HCT116 (cell line): ENCODE measurements at regions of chr1 and their contacts with region 1.

Region 1: DNA sequence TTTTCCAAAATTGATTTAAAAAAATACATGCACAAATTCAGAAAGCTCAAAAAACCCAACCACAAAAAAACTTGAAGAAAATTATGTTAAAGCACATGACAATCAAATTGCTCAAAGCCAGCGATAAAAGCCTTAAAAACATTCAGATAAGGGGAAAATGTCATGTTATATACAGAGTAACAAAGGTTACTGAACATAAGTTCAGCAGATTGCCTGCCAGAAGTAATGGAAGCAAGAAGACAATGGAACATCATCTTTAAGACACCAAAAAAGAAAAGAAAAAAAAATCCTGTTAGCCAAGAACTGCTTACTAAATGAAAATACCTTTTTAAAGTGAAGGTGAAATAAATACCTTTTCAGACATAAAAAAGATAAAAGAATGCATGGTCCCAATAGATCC is 147.2 kb upstream of the SGIP1 start:
- DNase-seq: no peak
- ATAC-seq: no peak
- H3K4me3 ChIP-seq: no peak overlapping the region
- H3K27ac ChIP-seq: no peak overlapping the region
- H3K4me1 ChIP-seq: no peaks in the 10 kb centered on the region
- H3K27me3 ChIP-seq: no peaks in the 10 kb centered on the region
- CTCF ChIP-seq: no peak
- POLR2A ChIP-seq: no peak
- RAD21 ChIP-seq: no peak

Region 2: DNA sequence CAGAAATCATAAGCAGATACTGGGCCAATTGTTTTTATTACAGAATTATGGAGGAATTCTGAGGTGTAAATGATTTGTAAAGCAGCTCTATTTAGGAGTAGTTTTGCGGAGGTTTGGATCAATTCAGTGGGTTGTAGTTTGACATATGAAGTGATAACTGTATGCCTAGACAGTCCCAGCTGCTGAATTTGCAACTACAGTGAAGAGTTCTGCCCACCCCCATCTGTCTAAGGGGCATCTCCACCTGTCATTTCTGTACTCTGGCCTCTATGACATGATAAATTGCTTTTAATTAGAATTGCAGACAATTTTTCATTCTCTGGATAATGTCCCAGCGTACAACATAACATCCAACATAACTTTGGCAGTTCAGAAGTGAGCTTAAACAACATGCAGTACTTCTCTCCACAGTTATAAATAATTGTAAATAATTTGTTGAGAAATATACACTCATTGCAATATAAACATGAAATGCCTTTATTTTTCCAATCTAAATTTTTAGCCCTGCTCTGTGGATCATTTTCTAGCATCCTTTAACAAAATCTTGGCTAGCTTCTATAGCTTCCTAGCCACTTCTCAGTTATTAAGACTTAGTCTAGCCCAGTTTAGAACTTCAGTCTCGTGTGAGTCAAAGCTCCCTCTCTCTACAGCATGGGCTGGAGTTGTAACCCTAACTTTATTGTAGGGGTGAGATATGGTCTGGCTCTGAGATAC is 541.7 kb before region 1 on chr1:
- CTCF ChIA-PET with region 1: no interaction called
- POLR2A ChIA-PET with region 1: no interaction called
- RAD21 ChIA-PET with region 1: no interaction called
- intact Hi-C with region 1: no loop called
- DNase-seq: no peak
- ATAC-seq: no peak
- H3K4me3 ChIP-seq: no peak overlapping the region
- H3K27ac ChIP-seq: no peak overlapping the region
- H3K4me1 ChIP-seq: no peaks in the 10 kb centered on the region
- H3K27me3 ChIP-seq: no peaks in the 10 kb centered on the region
- CTCF ChIP-seq: no peak
- POLR2A ChIP-seq: no peak
- RAD21 ChIP-seq: no peak

Region 3: GRCh38 chr1:66413136-66413837 is 26.6 kb after region 1 on chr1:
- CTCF ChIA-PET with region 1: no interaction called
- POLR2A ChIA-PET with region 1: no interaction called
- RAD21 ChIA-PET with region 1: no interaction called
- intact Hi-C with region 1: loop called (anchors 1 kb)
- DNase-seq: no peak
- ATAC-seq: no peak
- H3K4me3 ChIP-seq: no peak overlapping the region
- H3K27ac ChIP-seq: no peak overlapping the region
- H3K4me1 ChIP-seq: no peaks in the 10 kb centered on the region; a peak in 1 of 4 replicates
- H3K27me3 ChIP-seq: no peaks in the 10 kb centered on the region
- CTCF ChIP-seq: no peak
- POLR2A ChIP-seq: no peak
- RAD21 ChIP-seq: no peak

Region 4: DNA sequence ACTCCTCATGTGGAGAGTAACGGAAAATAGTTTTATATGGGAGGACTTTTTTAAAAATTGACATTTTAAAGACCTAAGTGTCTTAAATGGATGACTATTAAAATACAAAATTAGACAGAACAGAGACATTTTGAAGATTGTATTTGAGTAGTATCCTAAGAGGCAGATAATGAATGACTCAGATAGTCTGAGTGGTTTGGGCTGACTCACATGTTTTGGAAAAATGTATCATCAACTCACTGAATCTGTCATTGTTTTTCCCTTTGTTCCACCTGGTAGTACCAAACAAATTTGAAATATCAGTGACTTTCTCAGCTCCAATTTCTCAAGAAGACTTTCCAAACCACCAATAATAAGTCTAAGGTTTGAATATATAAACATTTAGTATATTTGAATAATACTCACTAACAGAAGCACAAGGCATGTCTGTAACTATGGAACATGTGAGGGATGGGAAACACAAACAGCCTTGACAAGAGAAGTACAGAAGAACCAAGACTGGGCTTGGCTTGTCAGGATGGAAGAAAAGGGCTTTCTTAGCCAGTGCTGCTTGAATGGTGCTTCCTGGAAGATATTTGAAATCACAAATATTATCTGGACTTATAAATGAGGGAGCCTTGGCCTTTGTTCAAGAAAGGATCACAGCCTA is 237.8 kb after region 1 on chr1:
- CTCF ChIA-PET with region 1: no interaction called
- POLR2A ChIA-PET with region 1: no interaction called
- RAD21 ChIA-PET with region 1: no interaction called
- intact Hi-C with region 1: no loop called
- DNase-seq: no peak
- ATAC-seq: no peak
- H3K4me3 ChIP-seq: no peak overlapping the region
- H3K27ac ChIP-seq: no peak overlapping the region
- H3K4me1 ChIP-seq: peaks cover 0 to 14% of the 10 kb centered on the region in 2 experiments; a peak in 2 of 4 replicates
- H3K27me3 ChIP-seq: no peaks in the 10 kb centered on the region
- CTCF ChIP-seq: no peak
- POLR2A ChIP-seq: no peak
- RAD21 ChIP-seq: no peak

Region 5: DNA sequence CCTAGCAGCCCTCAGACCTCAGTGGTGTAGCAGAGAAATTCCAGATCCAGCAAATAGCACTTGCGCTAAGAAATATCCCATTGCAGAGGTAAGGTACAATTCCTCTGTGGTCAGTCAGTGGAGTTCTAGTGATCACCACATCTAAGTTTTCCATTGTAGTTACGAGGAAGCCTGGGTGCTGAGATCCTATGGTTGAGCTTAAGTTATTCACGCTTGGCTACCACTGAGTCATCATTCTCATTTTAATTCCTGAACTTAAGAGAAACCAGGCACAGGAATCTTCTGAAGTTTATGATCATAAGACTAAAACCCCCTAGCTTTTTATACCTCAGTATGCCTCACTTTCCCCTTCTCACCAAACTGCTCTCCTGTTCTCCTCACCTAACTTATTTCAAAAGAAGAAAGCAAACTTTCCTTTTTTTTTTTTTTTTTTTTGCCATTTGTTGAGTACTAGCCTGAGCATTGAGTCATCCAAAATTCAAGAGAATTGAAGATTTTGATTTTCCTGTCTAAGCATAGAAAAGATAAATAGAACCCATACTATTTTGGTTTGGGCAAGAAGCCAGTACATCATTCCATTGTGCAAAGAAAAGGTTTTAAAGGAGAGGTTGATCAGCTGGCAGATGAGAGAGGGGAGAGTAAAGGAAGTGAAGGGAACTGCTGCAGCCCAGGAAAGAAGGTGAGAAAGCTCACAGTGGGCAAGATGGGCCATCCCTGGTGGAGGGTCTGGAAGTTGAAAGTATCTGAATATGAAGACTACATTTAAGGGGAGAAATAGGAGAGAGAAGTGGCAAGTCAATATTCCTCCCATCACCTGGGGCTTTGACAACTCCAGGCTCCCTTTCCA is 1003.6 kb after region 1 on chr1:
- CTCF ChIA-PET with region 1: no interaction called
- POLR2A ChIA-PET with region 1: no interaction called
- RAD21 ChIA-PET with region 1: no interaction called
- intact Hi-C with region 1: no loop called
- DNase-seq: no peak
- ATAC-seq: no peak
- H3K4me3 ChIP-seq: no peak overlapping the region
- H3K27ac ChIP-seq: no peak overlapping the region
- H3K4me1 ChIP-seq: no peaks in the 10 kb centered on the region; a peak in 1 of 4 replicates
- H3K27me3 ChIP-seq: no peaks in the 10 kb centered on the region
- CTCF ChIP-seq: no peak
- POLR2A ChIP-seq: no peak
- RAD21 ChIP-seq: no peak